Right cardiac atrium (tissue), 5 donors: ENCODE measurements at regions of chr2 and their contacts with region 1.

Region 1: GRCh38 chr2:176126929-176127773 is 2.4 kb upstream of the HOXD8 start:
- DNase-seq: peak in 2 of 3 donors; percentile 64 to 87
- ATAC-seq: no peak
- H3K4me3 ChIP-seq: no peak overlapping the region
- H3K27ac ChIP-seq: no peak overlapping the region
- H3K4me1 ChIP-seq: peaks cover 9% of the 10 kb centered on the region
- H3K27me3 ChIP-seq: peaks cover 9% of the 10 kb centered on the region

Region 2: DNA sequence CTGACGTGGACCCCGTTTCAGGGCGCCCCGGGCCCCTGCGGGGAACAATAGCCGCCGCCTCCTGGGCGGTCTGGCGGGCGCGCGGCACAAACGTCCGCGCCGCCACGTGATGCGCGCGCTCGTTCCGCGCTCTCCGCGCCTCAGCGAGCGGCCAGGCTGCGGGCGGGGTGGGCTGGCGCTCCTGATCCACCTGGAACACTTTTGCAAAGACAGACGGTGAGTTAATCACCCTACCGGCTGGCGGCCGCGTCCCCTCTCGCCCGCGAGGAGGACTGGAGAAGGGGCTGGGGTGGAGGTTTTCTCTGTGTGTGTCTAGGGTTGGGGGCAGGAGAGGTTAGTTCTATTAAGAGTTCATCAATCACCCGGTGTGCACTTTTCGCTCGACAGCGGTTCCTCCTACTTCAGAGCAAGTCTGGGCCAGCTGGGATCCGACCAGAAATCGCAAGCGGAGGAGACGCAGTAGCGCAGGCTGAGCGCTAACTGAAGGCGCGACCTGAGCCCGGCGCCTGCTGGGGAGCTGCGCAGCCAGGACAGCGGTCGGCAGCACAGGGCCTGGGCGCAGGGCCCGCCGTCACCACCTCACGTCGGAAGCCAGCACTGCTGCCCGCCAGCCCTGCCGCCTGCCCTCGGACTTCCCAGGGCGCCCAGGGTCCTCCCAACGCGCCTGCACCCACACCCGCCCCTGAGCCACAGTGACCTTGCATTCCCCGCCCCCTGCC is 51.0 kb after region 1 on chr2:
- intact Hi-C with region 1: no loop called
- DNase-seq: no peak
- ATAC-seq: peak in 1 of 2 donors; percentile 31
- H3K4me3 ChIP-seq: peak overlapping the region; percentile 8
- H3K27ac ChIP-seq: no peak overlapping the region
- H3K4me1 ChIP-seq: no peaks in the 10 kb centered on the region
- H3K27me3 ChIP-seq: peaks cover 6% of the 10 kb centered on the region

Region 3: DNA sequence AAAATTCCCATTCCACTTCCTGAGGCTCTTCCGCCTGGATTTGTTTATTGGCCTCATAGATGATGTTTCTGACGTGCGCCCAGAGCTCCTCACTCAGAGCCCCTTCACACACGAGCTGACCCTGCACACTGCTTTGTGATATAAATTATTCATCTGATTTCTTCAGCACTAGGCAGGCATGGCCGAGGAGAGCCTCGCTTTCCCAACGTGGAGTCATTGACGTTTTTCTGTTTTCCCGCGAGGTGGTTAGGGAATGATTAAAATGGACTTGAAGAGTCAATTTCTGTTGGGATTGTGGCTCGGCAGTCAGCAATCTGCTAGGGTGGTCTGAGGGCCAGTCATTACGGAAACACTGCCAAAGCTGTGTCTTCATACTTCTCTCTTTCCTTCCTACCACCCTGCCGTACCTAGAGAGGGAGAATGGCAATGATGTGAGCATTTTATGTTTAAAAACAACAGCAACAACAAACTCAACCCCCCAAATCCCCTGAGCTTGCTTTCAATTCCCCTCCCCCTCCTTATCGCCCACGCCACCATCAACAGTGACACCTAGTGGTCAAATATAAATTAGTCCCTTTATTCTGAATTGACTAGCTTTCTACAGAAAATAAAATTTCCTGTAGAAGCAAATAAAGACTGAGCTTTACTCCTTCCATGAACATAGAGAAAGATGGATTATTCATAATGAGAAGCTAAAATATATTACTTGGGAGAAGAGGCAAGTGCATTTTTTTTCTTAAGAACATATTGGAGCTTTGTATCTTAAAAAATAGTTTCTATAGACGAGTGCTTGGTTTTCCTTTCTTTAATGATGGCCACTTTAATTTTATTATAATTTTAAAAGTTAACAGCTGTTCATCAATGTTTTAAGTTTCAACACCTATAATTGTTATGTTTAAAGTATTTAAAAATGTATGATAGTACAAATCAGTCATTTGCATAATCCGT is 427.2 kb after region 1 on chr2:
- intact Hi-C with region 1: loop called in 1 of 4 experiments (anchors 10 kb)
- DNase-seq: peak in 1 of 3 donors; percentile 60
- ATAC-seq: peak; percentile 65 to 82
- H3K4me3 ChIP-seq: peak overlapping the region; percentile 38
- H3K27ac ChIP-seq: peak overlapping the region; percentile 14
- H3K4me1 ChIP-seq: peaks cover 2% of the 10 kb centered on the region
- H3K27me3 ChIP-seq: peaks cover 2% of the 10 kb centered on the region

Region 4: GRCh38 chr2:177129610-177130009 is 1002.5 kb after region 1 on chr2:
- intact Hi-C with region 1: loop called in 1 of 4 experiments (anchors 10 kb)
- DNase-seq: no peak
- ATAC-seq: no peak
- H3K4me3 ChIP-seq: no peak overlapping the region
- H3K27ac ChIP-seq: no peak overlapping the region
- H3K4me1 ChIP-seq: no peaks in the 10 kb centered on the region
- H3K27me3 ChIP-seq: no peaks in the 10 kb centered on the region

Region 5: GRCh38 chr2:177148477-177149154 is 1021.5 kb after region 1 on chr2:
- intact Hi-C with region 1: loop called in 2 of 4 experiments (anchors 5 to 10 kb)
- DNase-seq: peak; percentile 67 to 85 (median 76)
- ATAC-seq: peak; percentile 80 to 93
- H3K4me3 ChIP-seq: peak overlapping the region; percentile 31
- H3K27ac ChIP-seq: no peak overlapping the region
- H3K4me1 ChIP-seq: no peaks in the 10 kb centered on the region
- H3K27me3 ChIP-seq: peaks cover 4% of the 10 kb centered on the region